ENCODE measurements at regions of chr15 and their contacts with region 1.

Region 1: DNA sequence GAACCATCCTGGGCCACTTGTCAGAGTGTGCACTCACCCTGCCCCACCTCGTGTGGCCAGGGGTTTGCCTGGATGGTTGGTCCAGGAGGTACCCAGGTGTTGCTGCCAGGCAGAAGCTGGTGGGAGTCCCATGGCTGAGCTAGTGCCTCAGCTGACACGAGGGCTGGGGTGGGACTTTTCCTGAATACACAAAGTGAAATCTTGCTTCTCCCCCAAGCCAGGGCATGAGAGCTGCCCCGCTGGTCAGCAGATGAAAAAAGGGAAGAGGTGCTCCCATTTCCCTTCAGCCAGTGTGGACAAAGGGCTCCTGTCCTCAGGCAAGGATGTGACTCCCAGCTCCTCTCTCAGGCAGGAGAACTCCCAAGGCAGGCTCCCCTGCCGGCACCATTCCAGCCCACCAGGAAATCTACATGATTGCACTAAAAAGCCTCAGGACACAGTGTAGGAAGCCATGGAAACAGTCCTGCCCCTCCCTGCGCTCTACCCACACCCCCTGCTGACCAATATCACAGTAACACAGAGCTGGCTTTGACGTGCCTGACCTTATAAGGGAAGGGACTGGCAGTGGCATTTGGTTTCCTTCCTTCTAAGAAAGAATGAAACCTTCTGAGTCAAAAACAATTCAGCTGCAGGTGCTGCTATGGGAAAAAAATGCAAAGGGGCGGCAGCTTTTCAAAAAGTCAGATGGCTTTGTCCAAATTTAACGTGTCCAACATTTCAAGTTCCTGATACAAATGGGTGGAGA is 33.9 kb downstream of the MYO5C start:
- DNase-seq: peak; percentile 68
- H3K4me3 ChIP-seq: no peak overlapping the region
- H3K27ac ChIP-seq: peak overlapping the region; percentile 63 to 72
- H3K4me1 ChIP-seq: peaks cover 9% of the 10 kb centered on the region
- H3K27me3 ChIP-seq: no peaks in the 10 kb centered on the region
- CTCF ChIP-seq: peak in 2 of 4 experiments; percentile 40 to 42
- POLR2A ChIP-seq: peak; percentile 29

Region 2: GRCh38 chr15:52071546-52071945 is 190.1 kb before region 1 on chr15:
- intact Hi-C with region 1: no loop called
- DNase-seq: peak; percentile 87
- H3K4me3 ChIP-seq: no peak overlapping the region
- H3K27ac ChIP-seq: peak overlapping the region in 1 of 2 donors; percentile 17
- H3K4me1 ChIP-seq: no peaks in the 10 kb centered on the region
- H3K27me3 ChIP-seq: no peaks in the 10 kb centered on the region
- CTCF ChIP-seq: no peak
- POLR2A ChIP-seq: no peak

Region 3: GRCh38 chr15:52528991-52529926 is 267.6 kb after region 1 on chr15:
- intact Hi-C with region 1: loop called (anchors 10 kb)
- DNase-seq: peak; percentile 63
- H3K4me3 ChIP-seq: peak overlapping the region; percentile 81 to 88
- H3K27ac ChIP-seq: peak overlapping the region; percentile 65 to 81
- H3K4me1 ChIP-seq: no peaks in the 10 kb centered on the region
- H3K27me3 ChIP-seq: no peaks in the 10 kb centered on the region
- CTCF ChIP-seq: peak in 2 of 4 experiments; percentile 5 to 8
- POLR2A ChIP-seq: peak; percentile 7